Body of pancreas (tissue), 4 donors: ENCODE measurements at regions of chr12 and their contacts with region 1.

Region 1: DNA sequence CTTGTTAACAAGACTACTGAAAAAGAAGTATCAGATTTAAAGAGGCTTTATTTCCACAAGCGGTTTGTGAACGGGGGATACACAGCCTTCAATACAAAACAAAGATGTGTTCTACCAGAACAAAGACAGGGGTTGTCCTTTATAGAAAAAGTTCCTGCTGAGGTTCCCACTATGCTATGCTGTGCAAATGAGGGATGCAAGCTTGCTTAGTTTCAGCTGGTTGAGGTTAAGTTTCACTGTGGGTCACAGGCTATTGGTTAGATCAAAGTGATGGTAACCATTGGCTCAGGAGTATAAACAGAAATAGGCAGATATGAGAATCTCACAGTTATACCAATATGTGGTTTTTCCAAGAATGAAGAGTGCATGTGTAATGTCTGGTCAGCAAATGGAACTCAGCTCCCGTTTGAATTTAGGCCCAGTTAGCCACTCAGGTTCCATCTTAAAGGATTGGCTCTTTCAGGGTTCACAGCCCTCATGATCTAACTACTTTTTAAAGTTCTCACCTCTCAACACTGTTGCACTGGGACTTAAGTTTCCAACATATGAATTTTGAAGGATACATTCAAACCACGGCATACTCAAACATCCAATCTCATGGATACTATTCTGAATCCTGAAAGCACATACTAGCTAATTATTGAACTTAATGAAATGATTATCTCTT is 215.4 kb upstream of the DCN start:
- DNase-seq: no peak
- ATAC-seq: no peak
- H3K4me3 ChIP-seq: no peak overlapping the region
- H3K27ac ChIP-seq: no peak overlapping the region
- H3K4me1 ChIP-seq: no peaks in the 10 kb centered on the region
- H3K27me3 ChIP-seq: no peaks in the 10 kb centered on the region
- CTCF ChIP-seq: no peak
- POLR2A ChIP-seq: no peak

Region 2: GRCh38 chr12:90593596-90594295 is 804.3 kb before region 1 on chr12:
- intact Hi-C with region 1: no loop called
- DNase-seq: no peak
- ATAC-seq: no peak
- H3K4me3 ChIP-seq: no peak overlapping the region
- H3K27ac ChIP-seq: no peak overlapping the region
- H3K4me1 ChIP-seq: no peaks in the 10 kb centered on the region
- H3K27me3 ChIP-seq: no peaks in the 10 kb centered on the region
- CTCF ChIP-seq: no peak
- POLR2A ChIP-seq: no peak

Region 3: DNA sequence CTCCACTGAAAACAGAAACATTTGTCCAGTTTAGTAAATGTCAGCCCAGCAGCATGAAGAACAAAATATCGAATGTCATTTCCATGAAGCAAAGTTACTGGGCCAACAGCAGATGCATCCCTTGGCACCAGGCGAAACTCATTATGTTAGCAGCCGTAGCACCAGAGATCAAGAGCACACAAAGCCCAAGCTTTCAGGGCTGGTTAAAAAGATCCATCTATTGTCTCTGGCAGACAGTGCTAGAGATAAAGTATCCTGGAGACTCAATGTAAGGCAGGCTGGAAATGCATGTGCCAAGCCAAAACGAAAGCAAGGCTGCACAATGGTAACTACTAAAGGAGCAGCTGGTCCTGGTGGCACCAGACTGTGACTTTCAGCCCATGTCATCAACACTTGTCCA is 1184.5 kb after region 1 on chr12:
- intact Hi-C with region 1: loop called (anchors 10 kb)
- DNase-seq: no peak
- ATAC-seq: no peak
- H3K4me3 ChIP-seq: no peak overlapping the region
- H3K27ac ChIP-seq: no peak overlapping the region
- H3K4me1 ChIP-seq: no peaks in the 10 kb centered on the region
- H3K27me3 ChIP-seq: no peaks in the 10 kb centered on the region
- CTCF ChIP-seq: no peak
- POLR2A ChIP-seq: no peak